Posterior vena cava (tissue), 2 donors: ENCODE measurements at regions of chr2 and their contacts with region 1.

Region 1: DNA sequence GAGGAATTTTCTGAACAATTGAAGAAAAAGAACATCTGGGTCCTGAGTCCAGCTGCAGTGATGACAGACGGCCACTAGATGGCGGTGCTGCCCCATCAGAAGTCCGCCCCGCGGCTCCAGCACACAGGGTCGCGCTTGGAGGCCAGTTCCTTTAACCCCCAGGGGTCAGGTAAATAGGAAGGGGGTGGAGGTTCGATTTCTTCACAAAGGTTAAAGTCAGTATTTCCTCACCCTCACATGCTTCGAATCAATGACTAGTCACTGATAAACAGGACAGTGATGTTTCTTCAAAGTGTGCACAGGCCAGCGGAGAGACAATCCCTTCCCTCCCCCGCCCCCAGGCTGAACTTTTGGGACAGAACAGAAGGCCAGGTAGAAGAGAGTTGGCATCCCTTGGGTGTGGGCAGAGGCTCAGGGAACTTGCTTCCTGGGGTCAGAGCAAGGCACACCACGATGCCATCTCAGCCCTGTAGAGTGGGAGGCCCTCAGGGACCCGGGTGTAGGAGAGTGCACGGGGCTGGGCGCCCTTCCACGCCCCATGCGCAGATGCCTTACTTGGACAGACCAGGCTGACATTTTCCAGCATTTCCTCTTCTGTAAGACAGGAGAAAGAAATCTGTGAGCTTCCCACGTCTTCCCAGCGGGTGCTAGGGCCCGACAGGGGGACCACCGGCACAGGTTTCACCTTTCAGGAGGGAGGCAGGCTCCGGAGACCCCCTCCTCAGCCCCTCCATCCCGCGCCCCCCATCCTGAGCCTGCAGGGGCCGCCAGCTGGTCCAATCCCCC is 722 bp downstream of the APOB start:
- DNase-seq: peak; percentile 90

Region 2: DNA sequence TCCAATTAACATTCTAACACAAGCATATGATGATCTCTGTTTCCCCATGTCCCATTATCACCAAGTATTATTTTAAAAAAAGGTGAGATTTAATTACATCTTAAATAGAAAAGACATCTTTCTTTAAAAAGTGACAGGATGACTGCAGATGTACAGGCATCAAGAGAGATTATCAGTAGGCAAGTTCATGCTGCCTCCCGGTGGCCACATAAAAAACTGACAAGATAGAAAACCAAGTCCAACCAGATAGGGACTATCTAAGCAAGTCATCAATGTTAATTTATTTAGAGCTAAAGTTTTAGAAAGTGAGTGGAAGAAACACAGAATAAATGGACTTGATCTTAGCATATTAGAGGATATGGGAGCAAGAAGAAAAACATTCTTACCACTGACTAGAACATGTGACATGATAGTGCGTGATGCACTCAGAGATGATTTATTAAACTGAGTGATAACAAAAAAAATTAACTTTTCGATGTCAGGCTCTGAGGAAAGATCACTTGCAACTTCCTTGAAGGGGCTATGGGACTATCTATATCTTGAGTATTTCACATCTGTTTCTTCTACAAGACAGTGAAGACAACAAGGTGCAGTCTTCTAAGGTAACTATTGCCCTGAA is 75.3 kb after region 1 on chr2:
- intact Hi-C with region 1: loop called (anchors 2 to 5 kb)
- DNase-seq: no peak